GM23248 (cell line): ENCODE measurements at regions of chr1 and their contacts with region 1.

Region 1: DNA sequence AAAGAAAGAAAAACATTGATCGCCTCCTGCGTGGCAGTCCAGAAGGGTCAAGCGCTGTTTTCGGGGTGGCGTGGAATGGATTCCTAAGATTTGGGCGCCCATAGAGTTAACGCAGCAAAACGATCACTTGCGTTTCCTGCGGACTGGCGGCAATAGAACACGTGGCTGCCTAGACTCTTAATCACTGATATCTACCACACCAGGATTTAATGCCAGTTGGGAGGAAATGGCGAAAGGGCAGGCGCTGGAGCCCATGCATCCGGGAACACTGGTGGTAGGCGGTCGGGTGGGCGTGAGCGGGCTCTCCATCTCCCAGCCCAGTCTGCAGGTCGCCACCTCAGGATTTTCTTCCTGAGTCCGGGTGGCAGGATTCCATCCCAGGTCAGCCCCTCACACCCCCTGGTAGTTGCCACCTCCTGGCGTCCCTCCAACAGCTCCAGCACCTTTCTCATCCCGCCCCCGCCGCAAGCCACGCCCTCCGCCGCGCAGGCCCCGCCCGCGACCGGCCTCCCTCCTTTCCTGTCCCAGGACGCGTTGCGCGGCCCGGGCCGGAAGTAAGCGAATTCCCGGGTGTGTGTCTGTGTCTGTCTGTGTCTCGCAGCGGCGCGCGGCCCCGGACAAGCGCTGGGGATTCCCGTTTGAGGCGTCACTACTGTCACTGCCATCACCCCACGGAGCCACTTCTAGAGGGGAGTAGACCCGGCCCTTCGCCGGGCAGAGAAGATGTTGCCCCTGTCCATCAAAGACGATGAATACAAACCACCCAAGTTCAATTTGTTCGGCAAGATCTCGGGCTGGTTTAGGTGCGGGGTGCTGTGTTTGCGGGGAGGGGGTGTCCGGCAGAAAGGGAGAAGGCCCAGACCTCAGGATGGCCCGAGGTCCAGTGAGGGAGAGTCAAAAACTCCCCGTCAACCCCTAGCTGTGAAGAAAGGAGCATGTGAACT is at the start of gene SLC30A7:
- DNase-seq: peak; percentile 97
- H3K4me3 ChIP-seq: peak within 1 kb of the TSS; percentile 95
- H3K27ac ChIP-seq: peak within 1 kb of the TSS; percentile 91
- H3K4me1 ChIP-seq: peaks cover 31% of the 10 kb centered on the region
- H3K27me3 ChIP-seq: no peaks in the 10 kb centered on the region
- total RNA-seq, gene SLC30A7: 65.7 and 75.2 TPM in 2 replicates

Region 2: DNA sequence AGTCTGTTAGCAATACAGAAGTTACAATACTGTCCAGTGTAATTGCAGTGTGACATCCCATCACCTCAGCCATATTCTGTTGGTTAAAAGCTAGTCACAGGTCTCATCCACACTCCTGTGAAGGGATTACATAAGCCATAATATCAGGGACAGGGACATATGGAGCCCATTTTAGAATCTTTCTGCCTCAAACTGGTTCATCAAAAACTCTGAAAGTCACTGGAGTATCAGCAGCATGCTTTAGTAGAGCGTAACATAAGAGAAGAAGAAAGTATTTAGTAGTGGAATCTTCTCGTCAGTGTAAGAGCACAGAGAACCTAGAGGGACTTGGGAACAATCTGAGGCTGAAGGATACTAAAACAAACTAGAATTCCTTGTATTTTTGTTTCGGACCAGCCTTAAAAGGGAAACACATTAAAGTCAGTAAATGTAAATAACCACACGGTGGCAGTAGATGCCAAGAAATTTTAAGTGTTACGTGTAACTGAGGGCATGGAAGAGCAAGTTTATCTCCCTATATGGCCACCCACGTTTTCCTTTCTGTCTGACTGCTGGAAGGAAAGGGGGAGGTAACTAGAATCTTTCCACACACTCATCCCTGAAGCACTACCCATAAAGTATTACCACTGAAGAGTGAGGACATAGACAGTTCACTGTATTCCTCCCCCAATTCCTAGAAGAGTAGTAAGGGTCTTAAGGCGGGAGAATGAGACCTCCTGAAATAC is 1087.3 kb before region 1 on chr1:
- in situ Hi-C with region 1: loop called (anchors 25 kb)
- DNase-seq: peak; percentile 95
- H3K4me3 ChIP-seq: peak overlapping the region; percentile 48
- H3K27ac ChIP-seq: peak overlapping the region; percentile 7; the same call in 1 of the 2 replicates
- H3K4me1 ChIP-seq: peaks cover 5% of the 10 kb centered on the region
- H3K27me3 ChIP-seq: peaks cover 5% of the 10 kb centered on the region